GM10248 (cell line): ENCODE measurements at regions of chr12 and their contacts with region 1.

Region 1: DNA sequence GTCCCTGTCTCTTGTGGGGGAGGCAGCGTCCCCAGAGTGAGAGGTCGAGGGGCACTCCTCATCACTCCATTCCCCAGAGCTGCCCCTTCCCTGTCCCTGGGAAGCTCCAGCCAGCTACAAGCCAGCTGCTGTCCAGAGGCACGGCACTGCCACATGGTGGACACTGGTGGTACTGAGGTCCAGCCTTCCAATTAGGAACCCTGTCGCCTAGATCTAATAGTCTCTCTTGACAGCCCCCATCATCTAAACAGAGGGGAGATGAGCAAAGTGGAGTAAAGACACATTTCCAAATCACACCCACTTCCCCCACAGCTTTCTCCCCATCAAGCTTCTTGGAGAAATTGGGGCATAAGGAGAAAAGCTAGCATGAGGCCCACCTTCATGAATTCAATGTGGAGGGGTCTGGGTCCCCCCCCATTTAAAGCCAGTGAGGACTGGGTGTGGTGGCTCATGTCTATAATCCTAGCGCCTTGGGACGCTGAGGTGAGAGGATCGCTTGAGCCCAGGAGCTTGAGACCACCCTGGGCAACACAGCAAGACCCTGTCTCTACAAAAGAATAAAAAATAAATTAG is 2.1 kb upstream of the INHBE start:
- DNase-seq: peak; percentile 66
- CTCF ChIP-seq: peak; percentile 94

Region 2: DNA sequence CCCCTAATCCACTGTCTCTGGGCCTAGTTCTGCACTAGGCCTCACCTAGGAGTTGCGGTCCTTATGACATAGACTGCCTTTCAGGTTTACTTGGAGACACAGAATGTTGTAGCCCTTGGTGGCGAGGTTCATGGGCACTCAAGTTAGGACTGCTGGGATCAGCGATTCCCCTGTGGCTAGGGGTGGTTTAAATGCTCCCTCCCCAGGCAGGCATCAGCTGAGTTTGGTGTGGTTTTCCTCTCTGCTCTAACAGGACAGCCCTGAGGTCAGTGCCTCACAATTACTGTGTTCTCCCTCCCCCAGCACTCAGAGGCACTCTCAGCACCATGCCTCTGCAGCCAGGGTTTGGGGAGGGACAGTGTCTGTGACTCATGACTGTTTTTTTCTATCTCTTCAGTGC is 473.4 kb before region 1 on chr12:
- CTCF ChIA-PET with region 1: no interaction called
- POLR2A ChIA-PET with region 1: no interaction called
- DNase-seq: no peak
- CTCF ChIP-seq: no peak

Region 3: GRCh38 chr12:57058454-57058853 is 394.6 kb before region 1 on chr12:
- CTCF ChIA-PET with region 1: no interaction called
- POLR2A ChIA-PET with region 1: no interaction called
- DNase-seq: no peak
- CTCF ChIP-seq: no peak

Region 4: DNA sequence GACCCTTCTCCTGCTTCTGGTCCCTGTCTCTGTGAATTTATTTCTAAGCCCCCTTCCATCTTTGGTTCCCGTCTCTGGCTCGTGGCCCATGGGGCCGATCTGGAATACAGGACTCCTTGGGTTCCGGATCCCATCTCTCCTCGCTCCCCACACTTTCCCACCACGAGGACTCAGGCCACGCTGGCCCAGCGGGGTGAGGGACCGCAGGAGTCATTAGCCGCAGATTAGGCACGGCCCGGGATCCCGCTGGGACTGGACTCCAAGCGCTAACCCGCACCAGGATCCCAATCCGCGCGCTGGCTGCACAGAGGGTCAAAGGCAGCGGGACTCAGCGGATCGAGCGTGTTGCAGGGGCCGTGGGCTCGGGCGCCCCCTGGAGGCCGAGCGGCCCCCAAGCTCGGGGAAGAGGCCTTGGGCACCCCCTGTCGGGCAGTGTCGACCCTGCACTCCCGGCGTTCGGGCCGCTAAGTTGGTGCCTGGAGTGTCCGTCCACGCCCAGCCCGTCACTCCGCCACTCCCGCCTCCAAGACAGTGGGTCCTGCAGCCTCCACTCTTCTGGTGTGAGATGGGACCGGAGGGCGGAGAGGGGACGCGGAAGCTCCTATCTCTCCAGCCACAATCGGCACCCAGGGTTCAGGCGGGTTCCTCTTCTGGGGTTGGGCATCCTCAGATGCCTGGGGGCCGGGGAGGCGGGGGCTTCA is 214.0 kb before region 1 on chr12:
- CTCF ChIA-PET with region 1: interaction called, 84 read pairs
- POLR2A ChIA-PET with region 1: no interaction called
- DNase-seq: peak; percentile 95
- CTCF ChIP-seq: peak; percentile 100

Region 5: GRCh38 chr12:57272337-57273151 is 180.5 kb before region 1 on chr12:
- CTCF ChIA-PET with region 1: interaction called, 200 read pairs
- POLR2A ChIA-PET with region 1: no interaction called
- DNase-seq: no peak
- CTCF ChIP-seq: no peak

Region 6: GRCh38 chr12:57299514-57300016 is 153.5 kb before region 1 on chr12:
- CTCF ChIA-PET with region 1: interaction called, 238 read pairs
- POLR2A ChIA-PET with region 1: no interaction called
- DNase-seq: no peak
- CTCF ChIP-seq: no peak

Region 7: DNA sequence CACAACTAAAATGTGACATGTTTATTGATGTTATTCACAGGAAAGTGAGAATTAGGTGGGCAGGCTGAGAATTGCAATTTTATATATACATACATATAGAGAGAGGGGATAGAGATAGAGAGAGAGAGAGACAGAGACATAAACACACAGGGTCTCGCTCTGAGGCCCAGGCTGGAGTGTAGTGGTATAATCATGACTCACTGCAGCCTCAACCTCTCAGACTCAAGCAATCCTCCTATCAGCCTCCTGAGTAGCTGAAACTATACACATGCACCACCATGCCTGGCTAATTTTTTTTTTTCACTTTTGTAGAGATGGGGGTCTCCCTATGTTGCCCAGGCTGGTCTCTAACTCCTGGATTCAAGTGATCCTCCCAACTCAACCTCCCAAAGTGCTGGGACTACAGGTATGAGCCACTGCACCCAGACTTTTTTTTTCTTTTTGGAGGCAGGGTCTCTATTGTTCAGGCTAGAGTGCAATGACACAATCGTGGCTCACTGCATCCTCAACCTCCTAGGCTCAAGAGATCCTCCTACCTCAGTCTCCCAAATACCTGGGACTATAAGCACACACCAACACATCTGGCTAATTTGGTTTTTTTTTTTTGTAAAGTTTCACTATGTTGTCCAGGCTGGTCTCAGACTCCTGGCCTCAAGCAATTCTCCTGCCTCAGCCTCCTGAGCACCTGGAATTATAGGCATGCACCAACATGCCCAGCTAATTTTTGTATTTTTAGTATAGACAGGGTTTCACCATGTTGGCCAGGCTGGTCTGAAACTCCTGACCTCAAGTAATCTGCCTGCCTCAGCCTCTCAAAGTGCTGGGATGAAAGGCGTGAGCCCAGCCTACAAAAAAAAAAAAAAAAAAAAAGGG is 71.1 kb before region 1 on chr12:
- CTCF ChIA-PET with region 1: interaction called, 28 read pairs
- POLR2A ChIA-PET with region 1: interaction called, 4 read pairs
- DNase-seq: no peak
- CTCF ChIP-seq: no peak

Region 8: GRCh38 chr12:57430931-57431720 is 21.9 kb before region 1 on chr12 and contains the start of gene R3HDM2:
- CTCF ChIA-PET with region 1: interaction called, 178 read pairs
- POLR2A ChIA-PET with region 1: no interaction called
- DNase-seq: peak; percentile 97
- CTCF ChIP-seq: no peak

Region 9: DNA sequence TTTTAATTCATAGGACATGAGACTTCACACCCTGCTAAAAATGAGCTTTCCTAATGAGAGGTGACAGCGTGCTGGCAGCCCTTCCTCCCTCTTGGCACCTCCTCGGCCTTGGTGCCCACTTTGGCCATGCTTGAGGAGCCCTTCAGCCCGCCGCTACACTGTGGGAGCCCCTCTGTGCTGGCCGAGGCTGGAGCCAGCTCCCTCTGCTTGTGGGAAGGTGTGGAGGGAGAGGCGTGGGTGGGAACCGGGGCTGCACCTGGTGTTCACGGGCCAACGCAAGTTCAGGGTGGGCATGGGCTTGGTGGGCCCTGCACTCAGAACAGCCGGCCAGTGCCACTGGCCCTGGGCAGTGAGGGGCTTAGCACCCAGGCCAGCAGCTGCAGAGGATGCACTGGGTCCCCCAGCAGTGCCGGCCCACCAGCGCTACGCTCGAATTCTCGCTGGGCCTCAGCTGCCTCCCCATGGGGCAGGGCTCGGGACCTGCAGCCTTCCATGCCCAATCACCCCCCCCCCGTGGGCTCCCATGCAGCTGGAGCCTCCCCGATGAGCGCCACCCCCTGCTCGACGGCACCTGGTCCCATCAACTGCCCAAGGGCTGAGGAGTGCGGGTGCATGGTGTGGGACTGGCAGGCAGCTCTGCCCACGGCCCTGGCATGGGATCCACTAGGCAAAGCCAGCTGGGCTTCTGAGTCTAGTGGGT is 202.7 kb after region 1 on chr12:
- CTCF ChIA-PET with region 1: no interaction called
- POLR2A ChIA-PET with region 1: no interaction called
- DNase-seq: no peak
- CTCF ChIP-seq: no peak

Region 10: DNA sequence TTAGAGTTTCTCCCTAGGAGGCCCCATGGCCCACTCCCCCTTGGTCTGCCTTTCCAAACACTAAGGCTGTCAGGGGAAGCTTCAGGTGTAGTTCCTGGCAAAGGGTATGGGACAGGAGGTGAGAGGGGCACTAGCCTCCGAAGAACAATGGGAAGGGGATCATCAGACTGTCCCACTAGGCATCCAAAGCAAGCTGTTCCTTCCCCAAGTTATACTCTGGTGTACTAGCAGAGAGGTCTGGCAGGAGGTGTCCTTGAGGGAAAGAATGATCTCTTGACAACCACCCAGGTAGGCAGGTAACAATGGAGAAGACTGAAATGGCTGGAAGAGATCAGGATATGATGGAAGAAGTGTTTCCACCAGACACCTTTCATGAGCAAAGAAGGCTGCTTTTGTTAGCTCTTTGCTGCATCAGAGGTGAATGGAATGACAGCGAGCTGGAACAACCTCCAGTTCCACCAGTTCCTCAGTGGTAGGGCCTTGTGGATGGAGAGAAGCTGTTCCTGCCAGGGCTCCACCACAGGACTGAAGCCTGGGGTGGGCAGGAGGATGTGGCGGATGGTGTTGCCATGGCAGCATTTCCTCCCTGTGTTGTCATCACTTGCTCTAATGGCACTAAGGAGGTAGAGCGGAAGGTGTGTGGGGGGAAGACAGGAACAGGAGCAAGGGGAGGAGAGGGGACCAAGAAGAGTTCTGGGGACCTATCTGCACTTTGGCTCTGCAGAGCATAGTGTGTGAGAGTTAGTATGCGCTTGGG is 287.8 kb after region 1 on chr12:
- CTCF ChIA-PET with region 1: no interaction called
- POLR2A ChIA-PET with region 1: no interaction called
- DNase-seq: peak; percentile 72
- CTCF ChIP-seq: no peak